Cardiac septum (tissue), 1 donor: ENCODE measurements at regions of chr20 and their contacts with region 1.

Region 1: DNA sequence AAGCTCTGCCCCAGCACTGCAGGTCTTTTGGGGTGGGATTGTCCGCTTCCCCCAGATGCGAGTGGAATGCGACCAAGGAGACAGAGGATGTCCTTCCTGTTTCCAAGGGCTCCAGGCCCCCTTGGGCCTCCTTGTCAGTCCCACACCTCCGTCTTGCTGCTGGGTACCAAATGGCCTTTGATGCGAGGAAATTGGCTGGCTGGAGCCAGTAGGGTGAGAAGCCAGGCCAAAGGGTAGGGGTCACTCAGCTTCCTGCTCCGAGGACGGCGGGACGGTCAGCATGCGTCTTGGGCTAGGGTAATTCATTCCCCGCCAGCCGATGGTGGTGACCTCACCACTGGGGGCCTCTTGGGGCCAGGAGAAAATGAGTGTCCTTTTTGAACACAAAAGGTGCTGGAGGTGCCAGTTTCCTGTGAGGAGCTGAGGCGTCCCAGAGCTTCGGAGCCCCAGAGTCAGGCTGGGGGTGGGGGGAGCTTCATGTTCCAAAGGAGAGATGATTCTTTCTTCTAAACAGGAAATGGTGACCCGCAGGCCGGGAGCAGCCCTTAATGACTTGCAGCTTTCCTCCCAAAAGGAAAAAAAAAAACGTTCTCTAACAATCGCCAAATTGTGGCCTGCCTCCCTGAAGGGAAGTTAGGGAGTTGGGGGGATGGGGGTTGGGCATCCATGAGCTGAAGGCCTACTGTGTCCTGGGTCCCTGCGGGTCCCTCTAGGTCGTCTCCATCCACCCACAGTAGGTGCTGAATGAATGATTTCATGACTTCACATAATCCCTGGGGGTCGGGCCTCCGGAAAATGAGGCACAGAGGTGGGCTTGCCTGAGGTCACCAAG is 6.7 kb downstream of the SNAI1 start:
- DNase-seq: peak; percentile 85

Region 2: GRCh38 chr20:50048420-50049166 is 59.1 kb after region 1 on chr20:
- intact Hi-C with region 1: loop called (anchors 5 kb)
- DNase-seq: no peak